Right ventricle myocardium inferior (tissue), 1 donor: ENCODE measurements at regions of chr5 and their contacts with region 1.

Region 1: GRCh38 chr5:127030259-127031146 is at the start of gene MARCHF3:
- DNase-seq: peak; percentile 98
- ATAC-seq: peak; percentile 100
- total RNA-seq, gene MARCHF3: 30.1 TPM

Region 2: DNA sequence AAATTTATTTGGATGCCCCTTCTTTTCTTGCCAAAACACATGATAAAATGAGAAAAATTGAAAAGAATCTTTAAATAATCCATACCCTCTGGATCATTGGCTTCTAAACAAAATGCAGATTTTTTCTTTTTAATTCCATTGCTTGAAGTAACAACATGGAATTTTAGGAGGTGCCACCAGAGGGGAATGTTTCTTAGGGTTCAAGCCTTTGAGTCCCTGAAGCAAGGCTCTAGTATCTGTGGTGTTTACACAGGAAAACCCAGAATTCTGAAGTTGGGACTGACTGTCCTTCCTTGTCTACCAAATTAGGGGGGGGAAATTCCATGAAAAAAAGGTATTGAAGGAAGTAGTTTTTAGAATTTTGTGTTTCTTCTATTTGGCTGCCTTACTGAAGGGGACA is 184.2 kb before region 1 on chr5:
- intact Hi-C with region 1: loop called (anchors 5 kb)
- DNase-seq: no peak
- ATAC-seq: no peak

Region 3: DNA sequence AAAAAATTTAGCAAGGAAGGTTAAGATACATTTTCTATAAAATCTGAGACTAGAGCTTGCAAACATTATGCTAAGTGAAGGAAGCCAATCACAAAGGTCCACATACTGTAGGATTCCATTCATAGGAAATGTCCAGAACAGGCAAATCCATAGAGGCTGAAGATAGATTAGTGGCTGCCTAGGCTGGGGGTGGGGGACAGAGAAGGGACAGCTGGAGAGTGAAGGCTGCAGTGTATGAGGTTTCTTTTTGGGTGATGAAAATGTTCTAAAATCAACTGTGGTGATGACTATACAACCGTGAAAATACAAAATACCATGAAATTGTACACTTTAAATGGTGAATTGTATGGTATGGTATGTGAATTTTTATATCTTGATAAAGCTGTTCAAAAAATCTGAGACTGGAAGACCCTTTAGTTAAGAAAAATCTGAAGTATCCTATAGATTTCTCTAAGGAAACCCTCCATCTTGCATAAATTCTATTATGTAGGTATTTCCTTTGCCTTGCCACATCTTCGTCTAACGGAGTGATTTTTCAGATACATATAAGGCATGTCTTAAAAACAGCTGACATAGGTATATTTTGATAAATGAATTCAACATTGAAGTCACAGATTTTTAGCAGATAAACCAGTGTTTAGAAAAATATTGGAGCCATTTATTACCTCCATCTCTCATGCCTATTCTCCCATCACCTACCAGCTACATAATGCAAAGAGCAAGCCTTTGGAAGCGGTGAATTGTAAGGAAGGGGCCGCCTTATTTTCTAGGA is 132.5 kb before region 1 on chr5:
- intact Hi-C with region 1: no loop called
- DNase-seq: no peak
- ATAC-seq: no peak

Region 4: DNA sequence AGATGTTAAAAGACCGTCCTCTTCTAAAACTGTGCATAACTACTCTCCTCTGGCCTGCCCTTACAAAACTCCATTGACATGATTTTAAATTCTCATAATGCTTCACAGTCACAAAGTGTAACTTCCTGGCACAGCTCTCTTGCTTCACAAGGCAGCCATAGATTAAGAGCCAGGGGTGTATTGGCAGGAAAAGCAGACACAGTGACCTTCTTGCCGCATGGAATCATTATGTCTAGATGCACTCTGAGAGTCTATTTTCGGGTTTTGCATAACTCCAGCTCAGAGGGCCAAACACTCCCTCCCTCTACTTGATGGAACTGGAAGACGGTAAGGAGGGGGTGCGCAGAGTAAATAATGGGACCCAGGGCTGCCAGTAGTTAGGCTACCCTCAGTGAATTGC is 110.2 kb before region 1 on chr5:
- intact Hi-C with region 1: loop called (anchors 2 kb)
- DNase-seq: no peak
- ATAC-seq: peak; percentile 86

Region 5: GRCh38 chr5:126972062-126972895 is 58.2 kb before region 1 on chr5:
- intact Hi-C with region 1: loop called (anchors 5 kb)
- DNase-seq: no peak
- ATAC-seq: no peak

Region 6: DNA sequence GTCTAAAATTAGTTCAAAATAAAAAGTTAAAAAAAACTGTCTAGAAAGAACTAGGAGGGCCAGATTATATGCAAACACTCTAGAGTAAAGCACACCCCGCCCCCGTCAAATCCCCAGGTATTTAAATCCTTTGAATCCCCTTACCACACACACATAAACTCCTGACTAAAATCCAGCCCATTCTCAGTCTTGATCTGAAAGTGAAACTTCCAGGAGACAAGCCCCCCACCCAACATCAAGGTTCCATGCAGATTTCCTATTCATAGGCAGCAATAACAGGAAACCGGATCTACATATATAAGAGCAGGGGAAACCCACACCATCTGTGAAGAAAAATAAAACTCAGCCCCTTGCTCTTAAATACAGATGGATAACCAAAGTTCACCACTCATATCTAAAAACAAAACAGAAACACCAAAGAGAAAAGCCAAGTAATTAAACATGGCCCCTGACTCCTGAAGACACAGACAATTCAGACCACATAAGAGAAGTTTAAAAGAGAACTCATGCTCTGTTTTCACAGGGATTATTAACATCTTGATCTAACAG is 42.4 kb before region 1 on chr5:
- intact Hi-C with region 1: no loop called
- DNase-seq: no peak
- ATAC-seq: no peak

Region 7: DNA sequence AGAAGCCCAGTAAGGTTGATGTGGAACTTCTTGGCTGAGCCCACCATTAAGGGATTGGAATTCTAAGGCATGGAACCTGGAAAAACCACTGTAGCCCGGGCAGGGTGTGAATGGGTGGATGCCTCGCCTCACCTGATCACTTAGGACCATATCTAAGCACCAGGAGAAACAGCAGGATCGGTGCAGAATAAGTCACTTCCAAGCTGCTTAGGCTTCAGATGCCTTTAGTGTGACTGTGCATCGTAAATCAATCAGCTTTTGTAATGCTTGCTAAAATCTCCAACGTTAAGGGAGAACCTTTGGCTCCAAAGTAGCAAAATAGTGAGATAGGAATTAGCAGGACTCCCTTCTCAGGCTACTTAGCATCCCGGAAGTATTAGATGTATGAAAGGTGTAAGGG is 156.2 kb after region 1 on chr5:
- intact Hi-C with region 1: no loop called
- DNase-seq: no peak
- ATAC-seq: no peak